Motor neuron (in vitro differentiated cells): ENCODE measurements at regions of chr14 and their contacts with region 1.

Region 1: DNA sequence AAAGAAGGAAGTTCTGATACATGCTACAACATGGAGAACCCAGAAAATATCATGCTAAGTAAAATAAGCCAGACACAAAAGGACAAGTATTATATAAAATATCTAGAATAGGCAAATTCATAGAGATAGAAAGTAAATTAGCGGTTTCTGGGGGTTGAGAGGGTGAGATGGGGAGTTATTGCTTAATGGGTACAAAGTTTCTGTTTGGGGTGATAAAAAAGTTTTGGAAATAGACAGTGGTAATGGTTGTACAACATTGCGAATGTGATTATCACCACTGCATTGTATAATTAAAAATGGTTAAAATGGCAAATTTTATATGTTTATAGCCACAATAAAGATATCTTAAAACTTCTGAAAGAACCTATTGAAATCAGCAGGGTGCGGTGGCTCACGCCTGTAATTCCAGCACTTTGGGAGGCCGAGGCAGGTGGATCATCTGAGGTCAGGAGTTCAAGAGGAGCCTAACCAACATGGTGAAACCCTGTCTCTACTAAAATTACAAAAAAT is 15.0 kb downstream of the ZBTB25 start:
- ATAC-seq: no peak
- H3K4me3 ChIP-seq: no peak overlapping the region
- H3K27ac ChIP-seq: no peak overlapping the region
- H3K4me1 ChIP-seq: no peaks in the 10 kb centered on the region

Region 2: DNA sequence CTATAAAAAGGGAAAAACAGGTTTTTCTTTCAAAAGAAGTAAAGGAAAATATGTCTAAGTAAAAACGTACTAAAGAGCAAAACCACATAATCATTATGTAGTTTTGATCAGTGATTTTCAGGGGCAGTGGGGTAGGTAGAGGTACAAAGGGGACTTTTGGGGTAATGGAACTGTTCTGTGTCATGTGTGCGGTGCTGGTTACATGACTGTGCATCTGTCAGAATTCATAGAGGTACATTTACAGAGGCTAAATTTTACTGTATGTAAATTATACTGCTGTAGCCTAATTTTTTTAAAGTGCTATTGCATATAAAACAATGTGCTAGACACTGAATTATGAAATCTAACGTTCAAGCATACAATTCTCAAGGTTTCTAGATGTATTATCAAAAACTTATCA is 196.4 kb before region 1 on chr14:
- in situ Hi-C with region 1: no loop called
- ATAC-seq: no peak
- H3K4me3 ChIP-seq: no peak overlapping the region
- H3K27ac ChIP-seq: no peak overlapping the region
- H3K4me1 ChIP-seq: peaks cover 0 to 3% of the 10 kb centered on the region in 2 donors

Region 3: DNA sequence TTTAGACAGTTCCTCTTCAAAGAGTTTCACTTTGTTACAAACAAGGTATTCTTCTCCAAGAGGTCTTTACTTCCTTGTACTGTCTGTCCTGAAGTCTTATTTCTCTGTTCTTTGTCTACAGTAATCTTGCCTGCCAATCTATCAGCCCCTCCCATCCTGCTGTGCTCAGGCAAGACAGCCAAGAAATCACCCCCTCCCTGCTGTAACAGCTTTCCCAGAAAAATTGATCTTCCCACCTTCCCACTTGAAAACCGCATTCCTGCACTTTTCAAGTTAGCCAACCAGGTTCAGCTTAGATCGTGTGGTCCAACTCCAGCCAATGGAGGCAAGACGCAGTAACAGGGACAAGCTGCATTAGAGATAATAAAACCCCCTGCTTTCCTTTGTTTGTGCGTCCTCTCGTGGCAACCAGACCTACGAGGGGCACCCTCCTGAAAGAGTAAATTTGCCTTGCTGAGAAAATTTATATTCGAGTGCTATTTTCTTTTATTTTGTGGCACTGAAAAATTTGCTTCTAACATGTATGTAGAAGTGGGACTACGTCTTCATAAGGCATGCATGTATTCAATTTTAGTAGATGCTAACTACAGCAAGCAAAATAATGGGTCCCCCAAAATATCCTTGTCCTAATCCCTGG is 148.0 kb before region 1 on chr14:
- in situ Hi-C with region 1: loop called in 1 of 9 experiments (anchors 10 kb)
- ATAC-seq: no peak
- H3K4me3 ChIP-seq: no peak overlapping the region
- H3K27ac ChIP-seq: no peak overlapping the region
- H3K4me1 ChIP-seq: peaks cover 7 to 19% of the 10 kb centered on the region in 2 donors